ENCODE measurements at regions of chr5 and their contacts with region 1.

Region 1: GRCh38 chr5:172106511-172107356 is 81.3 kb downstream of the STK10 start:
- DNase-seq: peak; percentile 63
- H3K4me3 ChIP-seq: no peak overlapping the region
- H3K27ac ChIP-seq: no peak overlapping the region
- H3K4me1 ChIP-seq: peaks cover 13% of the 10 kb centered on the region
- H3K27me3 ChIP-seq: no peaks in the 10 kb centered on the region
- CTCF ChIP-seq: peak; percentile 95

Region 2: DNA sequence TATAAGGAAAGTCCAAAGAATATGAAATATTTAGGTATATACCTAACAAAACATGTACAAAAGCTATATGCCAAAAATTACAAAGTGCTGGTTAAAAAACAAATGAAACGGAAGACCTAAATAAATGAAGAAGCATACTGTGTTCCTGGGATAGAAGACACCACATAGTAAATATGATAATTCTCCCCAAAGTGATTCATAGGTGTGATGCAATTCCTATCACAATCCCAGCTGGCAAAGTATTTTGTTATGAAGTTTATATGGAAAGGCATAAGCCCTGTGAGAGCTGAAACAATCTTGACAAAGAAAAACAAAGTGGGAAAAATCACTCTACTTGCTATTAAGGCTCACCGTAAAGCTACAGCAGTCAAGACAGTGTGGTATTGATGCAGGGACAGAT is 323.7 kb before region 1 on chr5:
- intact Hi-C with region 1: no loop called
- DNase-seq: no peak
- H3K4me3 ChIP-seq: no peak overlapping the region
- H3K27ac ChIP-seq: no peak overlapping the region
- H3K4me1 ChIP-seq: no peaks in the 10 kb centered on the region
- H3K27me3 ChIP-seq: no peaks in the 10 kb centered on the region
- CTCF ChIP-seq: no peak

Region 3: DNA sequence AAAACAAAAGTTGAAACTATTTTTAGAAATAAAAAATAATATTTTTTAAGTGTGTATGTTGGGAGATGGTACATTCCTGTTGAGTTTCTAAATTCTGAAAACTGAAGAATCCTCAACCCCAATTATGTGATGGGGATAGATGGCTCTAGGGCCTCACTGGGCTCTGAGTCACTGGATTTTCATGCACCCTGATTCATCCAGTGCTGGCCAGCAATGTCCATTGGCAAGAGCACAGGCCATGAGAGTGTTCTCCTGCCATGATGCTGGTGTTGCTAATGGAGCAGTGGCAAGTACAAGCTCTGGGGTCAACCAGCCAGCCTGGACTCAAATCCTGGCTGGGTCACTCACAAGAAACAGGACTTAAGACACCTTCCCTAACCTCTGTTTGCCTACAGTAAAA is 297.8 kb before region 1 on chr5:
- intact Hi-C with region 1: no loop called
- DNase-seq: no peak
- H3K4me3 ChIP-seq: no peak overlapping the region
- H3K27ac ChIP-seq: no peak overlapping the region
- H3K4me1 ChIP-seq: no peaks in the 10 kb centered on the region
- H3K27me3 ChIP-seq: no peaks in the 10 kb centered on the region
- CTCF ChIP-seq: no peak

Region 4: GRCh38 chr5:172188033-172188892 is 81.5 kb after region 1 on chr5 and contains the start of gene STK10:
- intact Hi-C with region 1: loop called (anchors 2 kb)
- DNase-seq: peak; percentile 90
- H3K4me3 ChIP-seq: peak within 1 kb of the TSS; percentile 97
- H3K27ac ChIP-seq: peak within 1 kb of the TSS; percentile 95
- H3K4me1 ChIP-seq: no peaks in the 10 kb centered on the region
- H3K27me3 ChIP-seq: no peaks in the 10 kb centered on the region
- CTCF ChIP-seq: peak; percentile 88
- total RNA-seq, gene STK10: 16.1 to 23.2 TPM

Region 5: DNA sequence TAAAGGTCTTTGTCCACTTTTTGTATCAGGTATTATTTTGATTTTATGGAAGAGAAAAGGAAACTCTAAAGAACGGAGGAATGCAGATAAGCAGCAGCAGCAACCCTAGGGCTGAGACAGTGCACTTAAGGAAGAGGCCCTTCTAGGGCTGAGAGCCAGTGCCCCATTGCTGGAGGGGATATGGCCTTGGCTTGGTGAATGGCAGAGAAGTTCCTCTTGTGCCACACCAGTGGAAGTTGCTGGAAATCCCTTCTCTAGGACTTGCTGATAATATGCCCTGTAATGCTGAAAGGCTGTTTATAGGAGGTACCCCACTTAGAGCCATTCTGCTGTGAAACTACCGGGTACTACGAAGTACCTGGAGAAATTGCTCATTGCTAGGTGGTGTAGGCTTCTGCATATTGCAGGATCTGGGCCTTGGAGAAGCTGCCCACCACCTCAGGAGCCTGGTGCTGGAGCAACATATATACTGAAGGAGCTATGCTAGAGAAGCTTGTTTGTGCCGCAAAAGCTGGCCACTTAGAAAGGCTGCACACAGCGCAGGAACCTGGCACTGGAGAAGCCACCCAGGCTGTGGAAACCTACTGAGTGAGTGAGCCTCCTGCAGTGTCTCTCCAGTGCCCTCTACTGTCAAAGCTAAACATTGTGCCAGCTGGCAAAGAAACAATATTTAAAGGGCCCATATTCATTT is 186.5 kb after region 1 on chr5:
- intact Hi-C with region 1: loop called (anchors 5 kb)
- DNase-seq: peak; percentile 62
- H3K4me3 ChIP-seq: no peak overlapping the region
- H3K27ac ChIP-seq: no peak overlapping the region
- H3K4me1 ChIP-seq: no peaks in the 10 kb centered on the region
- H3K27me3 ChIP-seq: no peaks in the 10 kb centered on the region
- CTCF ChIP-seq: peak; percentile 83

Region 6: DNA sequence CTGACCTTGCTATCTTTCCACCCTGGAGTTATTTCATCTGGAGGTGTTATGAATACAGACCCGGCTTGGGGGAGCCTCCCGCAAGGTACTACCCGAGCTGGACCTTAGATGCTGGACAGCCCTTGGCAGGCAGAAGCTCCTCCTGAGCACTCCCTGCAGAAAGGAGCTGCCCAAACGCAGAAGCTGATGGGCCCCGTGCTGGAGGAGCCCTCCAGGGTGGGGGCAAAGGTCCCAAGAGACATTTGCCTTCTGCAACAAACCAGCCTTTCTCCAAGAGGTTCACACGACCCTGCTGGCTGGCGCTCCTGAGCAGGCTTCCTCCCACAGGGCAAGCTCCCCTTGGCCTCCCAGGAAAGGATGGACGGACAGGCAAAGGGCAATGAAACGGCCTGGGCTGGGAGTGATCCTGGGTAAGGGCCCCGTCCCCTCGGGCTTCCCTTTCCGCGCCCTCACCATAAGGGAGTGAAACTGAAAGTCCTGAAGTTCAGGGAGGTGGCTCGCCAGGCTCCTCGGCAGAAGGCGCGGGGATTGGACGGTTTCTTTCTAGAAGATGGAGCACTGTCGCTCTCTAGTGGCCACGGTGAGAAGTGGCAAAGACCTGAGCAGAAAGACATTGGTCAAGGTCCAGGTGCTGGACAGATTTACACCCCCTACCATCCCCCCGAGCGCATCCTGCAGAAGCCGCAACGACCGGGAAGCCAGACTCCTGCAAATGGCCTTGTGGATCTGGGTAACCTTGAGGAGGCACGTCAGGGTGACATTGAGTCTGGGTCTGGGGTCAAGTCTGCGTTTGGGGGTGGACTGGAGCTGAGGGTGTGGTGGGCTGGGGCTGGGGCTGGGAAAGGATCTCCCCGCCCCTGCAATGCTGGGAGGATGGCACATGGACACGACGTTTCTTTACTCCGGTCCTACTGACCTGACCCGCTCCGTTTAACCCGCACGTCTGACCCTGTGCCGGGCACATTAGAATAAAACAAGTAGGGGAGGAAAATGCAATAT is 590.7 kb after region 1 on chr5:
- intact Hi-C with region 1: no loop called
- DNase-seq: peak; percentile 95
- H3K4me3 ChIP-seq: peak overlapping the region; percentile 53
- H3K27ac ChIP-seq: peak overlapping the region; percentile 65
- H3K4me1 ChIP-seq: no peaks in the 10 kb centered on the region
- H3K27me3 ChIP-seq: no peaks in the 10 kb centered on the region
- CTCF ChIP-seq: peak; percentile 87

Region 7: DNA sequence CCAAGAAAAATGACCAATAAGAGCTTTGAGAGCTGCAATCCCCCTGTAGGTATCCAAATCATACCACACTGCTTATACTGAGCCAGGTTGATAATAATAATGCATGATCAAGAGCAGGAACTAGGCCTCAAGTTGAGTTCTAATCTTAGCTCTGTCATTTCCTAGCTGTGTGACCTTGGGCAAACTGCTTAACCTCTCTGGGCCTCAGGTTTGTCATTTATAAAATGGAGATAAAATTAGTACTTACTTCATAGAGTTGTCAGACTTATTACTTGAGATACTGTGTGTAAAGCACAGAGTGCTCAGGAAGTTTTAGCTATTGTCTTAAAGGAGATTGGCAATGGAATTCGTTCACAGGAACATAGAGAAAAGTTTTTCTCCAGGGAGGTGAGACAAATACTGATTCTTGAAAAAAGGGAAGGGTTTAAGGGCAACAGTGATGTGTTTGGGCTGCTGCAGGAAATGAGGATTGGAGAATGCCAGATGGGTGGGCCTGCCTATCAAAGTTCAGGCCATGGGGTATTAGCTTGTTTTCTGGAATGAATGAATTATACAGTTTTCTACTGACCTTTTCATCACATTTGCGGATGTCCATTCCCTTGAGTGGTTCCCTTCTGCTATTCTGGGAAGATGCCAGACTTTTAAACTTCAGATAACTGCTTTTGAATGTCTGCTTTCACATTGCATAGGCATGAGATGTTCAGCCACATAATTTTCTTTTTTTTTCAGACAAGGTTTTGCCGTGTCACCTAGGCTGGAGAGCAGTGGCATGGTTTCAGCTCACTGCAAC is 866.6 kb after region 1 on chr5:
- intact Hi-C with region 1: no loop called
- DNase-seq: no peak
- H3K4me3 ChIP-seq: no peak overlapping the region
- H3K27ac ChIP-seq: no peak overlapping the region
- H3K4me1 ChIP-seq: no peaks in the 10 kb centered on the region
- H3K27me3 ChIP-seq: no peaks in the 10 kb centered on the region
- CTCF ChIP-seq: no peak

Measured in colonic mucosa (tissue), 4 donors.